PC-9 (cell line): ENCODE measurements at regions of chr2 and their contacts with region 1.

Region 1: GRCh38 chr2:229586746-229587705 is 127.3 kb downstream of the DNER start:
- DNase-seq: peak; percentile 75 to 78
- H3K4me3 ChIP-seq: peak overlapping the region; percentile 54
- H3K27ac ChIP-seq: peak overlapping the region; percentile 71
- H3K4me1 ChIP-seq: peaks cover 15% of the 10 kb centered on the region
- H3K27me3 ChIP-seq: no peaks in the 10 kb centered on the region
- CTCF ChIP-seq: peak; percentile 89

Region 2: GRCh38 chr2:229133155-229133772 is 453.8 kb before region 1 on chr2:
- CTCF ChIA-PET with region 1: no interaction called
- POLR2A ChIA-PET with region 1: no interaction called
- intact Hi-C with region 1: loop called (anchors 2 kb)
- DNase-seq: peak in 1 of 2 experiments; percentile 7
- H3K4me3 ChIP-seq: no peak overlapping the region
- H3K27ac ChIP-seq: no peak overlapping the region
- H3K4me1 ChIP-seq: peaks cover 14% of the 10 kb centered on the region; the same call in 1 of the 2 replicates
- H3K27me3 ChIP-seq: no peaks in the 10 kb centered on the region
- CTCF ChIP-seq: peak; percentile 67

Region 3: GRCh38 chr2:229243890-229244560 is 343.0 kb before region 1 on chr2:
- CTCF ChIA-PET with region 1: no interaction called
- POLR2A ChIA-PET with region 1: no interaction called
- intact Hi-C with region 1: no loop called
- DNase-seq: no peak
- H3K4me3 ChIP-seq: no peak overlapping the region
- H3K27ac ChIP-seq: no peak overlapping the region
- H3K4me1 ChIP-seq: no peaks in the 10 kb centered on the region
- H3K27me3 ChIP-seq: no peaks in the 10 kb centered on the region
- CTCF ChIP-seq: no peak

Region 4: DNA sequence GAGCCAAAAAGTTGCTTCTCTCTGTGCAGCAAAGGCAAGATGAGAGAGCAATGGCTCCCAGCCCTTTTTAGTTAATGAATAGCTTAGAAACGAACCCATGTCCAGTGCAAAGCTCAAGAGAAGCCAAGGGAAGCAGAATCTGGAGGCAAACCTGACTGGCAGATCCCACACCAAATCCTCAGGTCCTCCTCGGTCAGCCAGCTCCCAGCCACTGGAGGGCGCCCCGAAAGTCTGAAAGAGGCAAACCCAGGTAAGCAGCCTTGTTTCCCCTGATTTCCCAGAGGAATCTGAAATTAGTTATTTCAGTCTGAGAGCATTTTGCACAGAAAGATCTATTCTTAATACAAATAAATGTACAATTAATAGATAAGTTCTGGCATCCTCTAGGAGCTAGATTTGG is 244.7 kb before region 1 on chr2:
- CTCF ChIA-PET with region 1: interaction called, 3 read pairs
- POLR2A ChIA-PET with region 1: no interaction called
- intact Hi-C with region 1: loop called (anchors 1 kb)
- DNase-seq: peak in 1 of 2 experiments; percentile 45
- H3K4me3 ChIP-seq: no peak overlapping the region
- H3K27ac ChIP-seq: no peak overlapping the region
- H3K4me1 ChIP-seq: no peaks in the 10 kb centered on the region
- H3K27me3 ChIP-seq: no peaks in the 10 kb centered on the region
- CTCF ChIP-seq: peak; percentile 68

Region 5: DNA sequence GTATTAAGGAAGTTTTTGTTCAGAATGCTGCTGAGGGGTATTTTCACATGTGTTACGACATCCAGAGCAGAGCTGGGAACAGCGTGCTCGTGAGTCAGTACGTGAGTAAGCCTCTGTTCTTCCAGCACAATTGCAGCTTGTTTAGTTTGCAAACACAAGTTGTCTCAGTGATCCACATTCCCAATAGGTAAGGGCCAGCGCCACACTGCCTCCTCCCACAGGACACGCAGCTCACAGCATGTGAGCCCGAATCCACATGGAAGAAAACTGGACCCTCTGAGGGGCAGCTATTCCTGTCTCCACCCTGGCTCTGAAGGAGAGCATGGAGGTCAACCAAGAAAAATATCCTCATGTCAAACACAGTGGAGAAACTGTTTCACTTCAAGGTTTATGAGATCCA is 142.0 kb before region 1 on chr2:
- CTCF ChIA-PET with region 1: interaction called, 3 read pairs
- POLR2A ChIA-PET with region 1: no interaction called
- intact Hi-C with region 1: loop called (anchors 5 kb)
- DNase-seq: peak; percentile 56 to 92
- H3K4me3 ChIP-seq: peak overlapping the region; percentile 12; the same call in 1 of the 2 replicates
- H3K27ac ChIP-seq: peak overlapping the region; percentile 84
- H3K4me1 ChIP-seq: peaks cover 17% of the 10 kb centered on the region
- H3K27me3 ChIP-seq: no peaks in the 10 kb centered on the region
- CTCF ChIP-seq: no peak